Thyroid gland (tissue), 4 donors: ENCODE measurements at regions of chr18 and their contacts with region 1.

Region 1: GRCh38 chr18:74342416-74343043 is 26.9 kb downstream of the C18orf63 start:
- DNase-seq: peak in 1 of 2 donors; percentile 7
- H3K4me3 ChIP-seq: no peak overlapping the region
- H3K27ac ChIP-seq: no peak overlapping the region
- H3K4me1 ChIP-seq: no peaks in the 10 kb centered on the region
- H3K27me3 ChIP-seq: no peaks in the 10 kb centered on the region
- CTCF ChIP-seq: peak in 5 of 6 experiments; percentile 10 to 73 (median 67)
- POLR2A ChIP-seq: no peak

Region 2: DNA sequence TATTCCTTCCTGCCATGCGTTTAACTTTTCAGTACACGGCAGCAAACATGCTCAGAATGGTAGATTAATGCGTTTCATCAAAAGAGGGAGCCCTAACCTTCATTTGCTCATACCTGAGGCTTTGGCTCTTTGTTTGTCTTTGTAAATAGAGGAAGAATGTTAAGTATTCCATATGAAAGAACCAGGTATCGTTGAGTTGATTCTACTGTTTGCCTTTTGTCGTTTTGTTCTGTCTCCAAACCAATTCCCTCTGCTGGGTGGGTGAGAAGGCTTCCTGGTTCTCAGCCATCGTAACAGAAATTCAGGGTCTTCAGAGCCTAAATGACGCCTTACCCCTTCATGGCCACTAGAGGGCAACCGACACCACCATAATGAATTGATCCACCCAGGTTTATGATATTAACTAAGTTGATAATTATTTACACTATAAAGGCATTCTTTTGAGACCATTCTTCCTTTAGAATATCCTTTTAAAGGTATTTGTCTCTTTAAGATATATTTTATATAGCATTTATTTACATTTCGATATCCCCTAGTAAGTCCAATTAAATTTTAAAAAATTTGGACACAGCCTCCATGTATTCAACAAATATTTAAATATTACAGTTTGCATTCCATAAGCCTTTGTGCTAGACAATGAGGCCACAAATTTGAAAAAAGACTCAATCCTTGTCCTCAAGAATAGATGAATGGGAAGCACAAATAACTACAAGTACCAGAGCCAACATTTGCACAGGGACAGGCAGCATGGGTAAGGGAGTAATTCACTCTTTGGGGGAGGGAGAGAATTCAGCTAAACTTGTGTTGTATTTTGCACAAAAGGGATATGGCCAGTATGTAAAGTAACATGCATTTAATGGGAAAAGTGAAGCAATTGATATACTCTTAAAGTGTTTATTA is 146.1 kb before region 1 on chr18:
- intact Hi-C with region 1: loop called (anchors 5 kb)
- DNase-seq: peak; percentile 26 to 35
- H3K4me3 ChIP-seq: no peak overlapping the region
- H3K27ac ChIP-seq: no peak overlapping the region
- H3K4me1 ChIP-seq: no peaks in the 10 kb centered on the region
- H3K27me3 ChIP-seq: no peaks in the 10 kb centered on the region
- CTCF ChIP-seq: peak; percentile 73 to 86 (median 84)
- POLR2A ChIP-seq: no peak